WTC11 (cell line): ENCODE measurements at regions of chr15 and their contacts with region 1.

Region 1: DNA sequence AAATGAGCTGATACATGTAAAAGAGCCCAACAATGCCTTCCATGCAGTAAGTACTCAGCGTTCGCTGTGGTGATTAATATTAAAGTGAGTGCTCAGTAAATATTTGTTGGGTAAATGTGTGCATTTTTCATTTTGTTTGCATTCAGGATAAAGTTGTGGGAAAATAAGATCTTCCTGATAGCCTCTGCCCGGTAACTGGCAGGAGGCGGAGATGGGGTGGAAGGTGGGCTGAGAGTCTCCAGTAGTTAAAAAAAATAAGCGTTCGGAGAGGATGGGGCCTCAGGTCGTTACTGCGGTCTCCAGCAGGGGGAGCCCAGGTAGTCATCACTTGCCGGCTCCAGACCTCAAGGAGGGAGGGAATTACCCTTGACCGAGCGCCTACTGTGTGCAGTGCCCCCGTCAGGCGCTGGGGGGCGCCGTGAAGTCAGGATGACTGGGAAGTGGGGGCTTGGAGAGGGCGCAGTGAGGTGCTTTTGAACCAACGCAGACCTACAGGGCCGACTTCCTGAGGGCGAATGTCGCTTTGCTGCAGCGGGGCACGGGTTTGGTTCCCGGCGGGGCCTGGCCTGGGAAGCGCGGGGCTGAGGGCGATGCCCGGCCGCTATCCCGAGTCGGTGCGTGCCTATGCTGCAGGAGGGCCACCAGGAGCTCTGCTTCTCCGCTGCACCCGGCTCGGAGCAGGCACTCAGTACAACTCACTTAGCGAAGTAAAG is 80.1 kb downstream of the RHCG start:
- DNase-seq: peak; percentile 99
- ATAC-seq: peak; percentile 80
- H3K4me3 Mint-ChIP-seq: peak overlapping the region; percentile 43
- H3K27ac Mint-ChIP-seq: no peak overlapping the region
- H3K4me1 Mint-ChIP-seq: peaks cover 27% of the 10 kb centered on the region
- H3K27me3 Mint-ChIP-seq: peaks cover 99% of the 10 kb centered on the region
- CTCF ChIP-seq: peak; percentile 99

Region 2: DNA sequence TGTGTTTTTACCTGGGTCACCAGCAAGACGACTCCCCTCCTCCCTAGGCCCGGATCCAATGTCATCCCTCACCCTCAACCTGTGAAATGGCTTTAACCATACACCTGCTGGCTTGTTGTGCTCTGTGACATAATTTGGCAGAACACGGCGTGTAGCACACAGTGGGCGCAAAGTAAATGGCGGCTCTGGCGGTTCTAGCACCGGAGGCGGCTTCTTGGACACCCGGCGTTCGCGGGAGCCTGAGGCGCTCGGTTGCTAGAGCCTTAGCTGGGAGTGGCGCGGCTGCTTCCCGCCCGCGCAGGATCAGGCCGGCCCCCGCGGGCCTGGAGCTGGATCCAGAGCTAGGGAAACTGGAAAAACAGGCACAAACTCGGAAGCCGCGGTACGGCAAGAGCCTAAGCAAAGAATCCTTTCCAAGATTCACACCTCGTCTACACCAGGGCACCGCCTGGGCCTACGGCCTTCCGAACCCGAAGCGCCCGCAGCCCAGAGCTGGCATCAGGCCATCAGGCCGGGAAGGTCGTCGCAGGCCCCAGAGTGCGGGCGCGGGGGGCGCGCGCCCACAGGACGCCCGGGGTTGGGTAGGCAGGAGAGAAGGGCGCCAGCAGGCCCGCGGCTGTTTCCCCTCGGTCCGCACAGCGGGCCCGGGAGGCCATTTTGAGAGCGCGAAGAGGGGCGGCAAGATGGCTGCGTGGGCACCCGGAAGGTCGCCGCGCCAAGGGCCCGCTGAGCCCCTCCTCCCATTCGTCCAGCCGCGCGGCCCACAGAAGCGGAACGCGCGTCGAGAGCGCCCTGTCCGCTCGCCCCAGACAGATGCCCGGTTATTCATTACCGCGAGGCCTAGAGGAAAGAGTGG is 37.8 kb before region 1 on chr15:
- CTCF ChIA-PET with region 1: interaction called, 11 read pairs
- POLR2A ChIA-PET with region 1: interaction called, 4 read pairs
- DNase-seq: no peak
- ATAC-seq: peak; percentile 45
- H3K4me3 Mint-ChIP-seq: peak overlapping the region; percentile 62
- H3K27ac Mint-ChIP-seq: no peak overlapping the region
- H3K4me1 Mint-ChIP-seq: peaks cover 46% of the 10 kb centered on the region
- H3K27me3 Mint-ChIP-seq: peaks cover 100% of the 10 kb centered on the region
- CTCF ChIP-seq: no peak

Region 3: GRCh38 chr15:89395996-89396395 is 20.3 kb before region 1 on chr15:
- CTCF ChIA-PET with region 1: interaction called, 28 read pairs
- POLR2A ChIA-PET with region 1: no interaction called
- DNase-seq: no peak
- ATAC-seq: no peak
- H3K4me3 Mint-ChIP-seq: no peak overlapping the region
- H3K27ac Mint-ChIP-seq: no peak overlapping the region
- H3K4me1 Mint-ChIP-seq: peaks cover 39% of the 10 kb centered on the region
- H3K27me3 Mint-ChIP-seq: peaks cover 99% of the 10 kb centered on the region
- CTCF ChIP-seq: no peak

Region 4: GRCh38 chr15:89472785-89473256 is 56.5 kb after region 1 on chr15:
- CTCF ChIA-PET with region 1: interaction called, 55 read pairs
- POLR2A ChIA-PET with region 1: no interaction called
- DNase-seq: peak; percentile 95
- ATAC-seq: peak; percentile 92
- H3K4me3 Mint-ChIP-seq: no peak overlapping the region
- H3K27ac Mint-ChIP-seq: no peak overlapping the region
- H3K4me1 Mint-ChIP-seq: peaks cover 26% of the 10 kb centered on the region
- H3K27me3 Mint-ChIP-seq: peaks cover 30% of the 10 kb centered on the region
- CTCF ChIP-seq: peak; percentile 86

Region 5: DNA sequence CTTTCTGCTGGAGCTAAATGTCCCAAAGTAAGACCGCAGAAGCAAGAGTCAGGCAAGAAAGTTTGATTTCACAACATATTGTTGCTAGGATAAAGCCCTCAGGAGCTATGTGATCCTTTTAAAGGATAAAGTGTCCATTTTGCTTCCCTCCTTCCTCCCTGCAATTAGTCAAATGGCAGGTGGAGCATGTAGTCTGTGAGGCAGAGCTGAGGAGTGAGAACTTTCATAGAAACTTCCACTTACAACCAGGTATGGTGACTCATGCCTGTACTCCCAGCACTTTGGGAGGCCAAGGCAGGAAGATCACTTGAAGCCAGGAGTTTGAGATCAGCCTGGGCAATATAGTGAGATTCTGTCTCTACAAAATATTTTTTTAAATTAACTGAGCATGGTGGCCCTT is 105.3 kb after region 1 on chr15:
- CTCF ChIA-PET with region 1: no interaction called
- POLR2A ChIA-PET with region 1: no interaction called
- DNase-seq: no peak
- ATAC-seq: no peak
- H3K4me3 Mint-ChIP-seq: no peak overlapping the region
- H3K27ac Mint-ChIP-seq: no peak overlapping the region
- H3K4me1 Mint-ChIP-seq: no peaks in the 10 kb centered on the region
- H3K27me3 Mint-ChIP-seq: 0 out of 2 replicates have a peak, but pooled peaks cover 4% of the 10 kb centered on the region
- CTCF ChIP-seq: no peak